PC-9 (cell line): ENCODE measurements at regions of chr15 and their contacts with region 1.

Region 1: DNA sequence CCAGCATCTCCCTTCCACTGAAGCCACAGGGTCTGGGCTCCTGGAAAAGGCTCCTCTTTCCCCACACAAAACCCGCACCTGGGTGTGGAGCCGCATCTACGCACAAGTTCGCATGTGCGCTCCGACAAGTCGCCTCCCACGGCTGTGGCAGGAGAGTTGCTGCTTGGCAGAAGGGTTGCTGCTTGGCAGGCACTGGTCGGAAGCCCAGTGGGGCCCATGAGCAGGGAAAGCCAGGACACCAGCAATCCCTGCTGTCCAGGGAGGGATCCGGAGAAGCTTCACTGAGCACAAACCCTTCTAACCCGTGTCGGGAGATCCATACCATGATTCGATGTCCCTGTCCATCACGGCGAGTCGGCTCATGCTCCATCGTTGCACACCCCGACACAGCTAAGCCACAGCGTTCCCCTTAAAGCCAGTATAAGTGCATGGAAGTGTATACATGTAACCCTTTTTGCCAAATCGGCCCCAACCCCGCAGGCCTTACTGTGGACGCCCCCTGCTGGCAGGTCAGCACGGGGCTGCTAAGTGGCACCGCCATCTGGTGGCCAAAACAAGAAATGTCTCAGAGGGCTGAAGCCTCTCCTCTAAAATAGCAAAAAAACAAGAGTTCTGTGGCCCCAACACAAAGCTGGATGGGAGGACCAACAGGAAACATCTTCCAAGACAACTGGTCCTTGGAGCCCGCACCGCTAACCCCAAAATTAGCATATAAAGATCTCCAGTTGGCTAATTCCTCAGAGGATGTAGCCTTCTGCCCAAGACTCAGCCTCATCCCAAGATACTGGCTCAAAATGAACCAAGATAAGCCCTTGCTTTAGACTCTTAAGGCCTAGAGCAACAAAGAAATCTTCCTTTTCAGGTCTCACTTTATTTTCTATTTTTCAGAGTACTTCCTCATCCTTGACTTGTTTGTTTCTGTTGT is 8.3 kb downstream of the ANKRD63 start:
- DNase-seq: peak; percentile 55 to 83
- H3K4me3 ChIP-seq: no peak overlapping the region
- H3K27ac ChIP-seq: no peak overlapping the region
- H3K4me1 ChIP-seq: no peaks in the 10 kb centered on the region
- H3K27me3 ChIP-seq: no peaks in the 10 kb centered on the region
- CTCF ChIP-seq: peak; percentile 99

Region 2: DNA sequence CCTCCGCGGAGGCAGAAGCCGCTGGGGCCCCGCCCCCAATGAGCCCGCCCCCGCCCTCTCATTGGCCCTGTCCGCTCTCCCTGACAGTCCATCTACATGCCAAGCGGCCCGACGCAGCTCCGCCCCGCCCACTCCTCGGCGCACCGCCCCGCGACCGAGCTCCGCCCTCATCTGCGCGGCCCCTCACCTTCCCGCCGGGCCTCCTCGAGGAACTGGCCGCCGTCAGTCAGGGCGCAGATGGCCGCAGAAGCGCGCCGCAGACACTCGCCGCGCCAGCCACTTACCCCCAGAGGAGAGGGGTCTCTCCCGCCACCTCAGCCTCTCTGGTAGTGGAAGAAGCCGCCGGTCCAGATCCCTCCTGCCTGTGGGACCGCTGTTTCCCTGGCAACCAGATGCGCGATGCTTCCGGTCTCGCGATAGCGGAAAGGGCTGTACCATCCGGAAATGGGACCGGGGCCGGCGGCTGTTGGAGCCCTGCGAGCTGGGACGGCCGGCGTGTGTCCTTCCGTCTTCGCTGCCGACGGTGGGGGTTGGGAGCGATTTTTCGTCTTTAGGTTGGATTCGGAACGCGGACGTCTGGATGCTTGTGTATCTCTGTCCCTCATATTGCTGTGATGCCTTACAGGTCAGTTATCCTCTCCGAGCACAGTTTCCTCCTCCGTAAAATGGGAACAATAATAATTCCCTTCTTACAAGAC is 492.0 kb before region 1 on chr15 and contains the start of gene FSIP1:
- CTCF ChIA-PET with region 1: no interaction called
- POLR2A ChIA-PET with region 1: no interaction called
- intact Hi-C with region 1: loop called (anchors 1 kb)
- DNase-seq: peak; percentile 84 to 97
- H3K4me3 ChIP-seq: peak within 1 kb of the TSS; percentile 98
- H3K27ac ChIP-seq: peak within 1 kb of the TSS; percentile 31; the same call in 1 of the 2 replicates
- H3K4me1 ChIP-seq: peaks cover 9% of the 10 kb centered on the region
- H3K27me3 ChIP-seq: no peaks in the 10 kb centered on the region
- CTCF ChIP-seq: no peak
- total RNA-seq, gene FSIP1: 0.63 and 1.2 TPM in 2 replicates

Region 3: DNA sequence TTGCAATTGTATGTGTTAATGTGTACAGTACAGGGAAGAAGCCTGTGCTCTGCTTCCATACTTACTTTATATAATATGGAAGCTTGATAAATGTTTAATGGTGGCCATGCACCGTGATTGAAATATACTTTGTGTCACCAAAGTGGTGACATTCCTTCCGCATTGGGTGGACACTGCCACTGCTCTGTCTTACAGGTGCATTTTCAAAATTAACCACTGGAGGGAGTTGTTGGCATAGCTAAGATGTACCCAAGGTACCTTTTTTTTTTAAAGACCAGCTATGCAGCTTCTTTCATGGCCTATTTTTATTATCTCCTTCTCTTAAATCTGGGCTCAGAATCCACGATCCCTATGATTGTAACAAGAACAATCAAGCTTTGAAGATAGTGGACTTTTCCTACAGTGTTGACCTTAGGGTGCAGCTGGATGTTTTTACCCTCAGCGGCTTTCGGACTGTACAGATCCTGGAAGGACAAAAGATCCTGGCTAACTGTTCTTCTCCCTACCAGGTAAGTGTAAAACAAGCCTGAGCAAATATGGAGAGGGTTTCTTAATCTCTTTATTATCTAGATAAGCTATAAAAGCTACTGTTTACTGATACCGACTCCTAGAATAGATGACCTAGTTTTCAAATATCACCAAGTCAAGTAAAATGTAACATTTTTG is 57.3 kb before region 1 on chr15:
- CTCF ChIA-PET with region 1: interaction called, 83 read pairs
- POLR2A ChIA-PET with region 1: no interaction called
- intact Hi-C with region 1: loop called (anchors 1 kb)
- DNase-seq: peak; percentile 55 to 64
- H3K4me3 ChIP-seq: no peak overlapping the region
- H3K27ac ChIP-seq: no peak overlapping the region
- H3K4me1 ChIP-seq: no peaks in the 10 kb centered on the region
- H3K27me3 ChIP-seq: no peaks in the 10 kb centered on the region
- CTCF ChIP-seq: peak; percentile 85

Region 4: DNA sequence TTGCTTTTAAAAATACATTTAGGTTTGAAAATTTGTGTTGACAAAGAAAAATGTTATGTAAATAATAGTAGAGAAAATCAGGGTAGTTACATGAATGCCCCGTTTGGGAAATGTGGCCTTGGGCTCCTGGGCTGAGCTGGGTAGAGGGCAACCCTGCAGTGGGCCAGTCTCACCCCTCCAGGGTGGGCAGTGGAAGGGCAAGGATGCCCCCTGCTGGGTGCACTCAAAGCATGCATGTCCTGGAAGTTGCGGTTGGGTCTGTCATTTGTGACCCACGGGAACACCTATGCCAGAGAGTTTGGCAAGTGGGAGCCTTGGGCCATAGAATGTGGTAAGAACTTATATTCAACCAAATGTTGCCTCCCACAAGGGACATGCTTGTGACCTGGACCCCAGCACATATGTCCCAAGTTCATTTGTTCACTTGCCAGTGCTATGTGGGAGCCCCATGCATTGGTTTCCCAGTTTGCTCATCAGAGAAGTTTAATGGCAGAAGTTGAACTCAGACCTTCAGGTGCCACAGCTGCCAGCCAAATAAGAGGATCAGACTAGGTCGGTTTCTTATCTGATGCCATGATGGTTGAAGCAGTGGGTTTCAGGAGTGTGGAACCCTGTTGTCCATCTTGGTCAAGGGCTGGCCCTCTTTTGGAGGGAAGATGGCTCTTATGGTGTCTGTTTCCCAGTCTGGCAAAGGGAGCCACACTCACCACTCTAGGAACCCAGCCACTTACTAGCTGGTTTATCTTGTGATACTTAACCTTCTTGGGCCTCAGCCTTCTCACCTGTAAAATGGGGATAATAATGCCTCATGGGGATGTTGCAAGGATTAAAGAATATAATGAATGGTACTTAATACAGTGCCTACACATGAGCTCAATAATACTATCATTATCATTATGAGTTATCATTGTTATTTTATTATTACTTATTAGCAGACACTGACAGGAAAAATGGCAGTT is 35.7 kb after region 1 on chr15:
- CTCF ChIA-PET with region 1: interaction called, 11 read pairs
- POLR2A ChIA-PET with region 1: interaction called, 5 read pairs
- intact Hi-C with region 1: loop called (anchors 1 kb)
- DNase-seq: peak in 1 of 2 experiments; percentile 55
- H3K4me3 ChIP-seq: no peak overlapping the region
- H3K27ac ChIP-seq: no peak overlapping the region
- H3K4me1 ChIP-seq: peaks cover 9% of the 10 kb centered on the region
- H3K27me3 ChIP-seq: no peaks in the 10 kb centered on the region
- CTCF ChIP-seq: peak; percentile 74

Region 5: GRCh38 chr15:40347559-40348473 is 73.2 kb after region 1 on chr15:
- CTCF ChIA-PET with region 1: no interaction called
- POLR2A ChIA-PET with region 1: no interaction called
- intact Hi-C with region 1: no loop called
- DNase-seq: peak; percentile 76 to 79
- H3K4me3 ChIP-seq: no peak overlapping the region
- H3K27ac ChIP-seq: peak overlapping the region; percentile 44
- H3K4me1 ChIP-seq: peaks cover 65% of the 10 kb centered on the region
- H3K27me3 ChIP-seq: no peaks in the 10 kb centered on the region
- CTCF ChIP-seq: no peak

Region 6: DNA sequence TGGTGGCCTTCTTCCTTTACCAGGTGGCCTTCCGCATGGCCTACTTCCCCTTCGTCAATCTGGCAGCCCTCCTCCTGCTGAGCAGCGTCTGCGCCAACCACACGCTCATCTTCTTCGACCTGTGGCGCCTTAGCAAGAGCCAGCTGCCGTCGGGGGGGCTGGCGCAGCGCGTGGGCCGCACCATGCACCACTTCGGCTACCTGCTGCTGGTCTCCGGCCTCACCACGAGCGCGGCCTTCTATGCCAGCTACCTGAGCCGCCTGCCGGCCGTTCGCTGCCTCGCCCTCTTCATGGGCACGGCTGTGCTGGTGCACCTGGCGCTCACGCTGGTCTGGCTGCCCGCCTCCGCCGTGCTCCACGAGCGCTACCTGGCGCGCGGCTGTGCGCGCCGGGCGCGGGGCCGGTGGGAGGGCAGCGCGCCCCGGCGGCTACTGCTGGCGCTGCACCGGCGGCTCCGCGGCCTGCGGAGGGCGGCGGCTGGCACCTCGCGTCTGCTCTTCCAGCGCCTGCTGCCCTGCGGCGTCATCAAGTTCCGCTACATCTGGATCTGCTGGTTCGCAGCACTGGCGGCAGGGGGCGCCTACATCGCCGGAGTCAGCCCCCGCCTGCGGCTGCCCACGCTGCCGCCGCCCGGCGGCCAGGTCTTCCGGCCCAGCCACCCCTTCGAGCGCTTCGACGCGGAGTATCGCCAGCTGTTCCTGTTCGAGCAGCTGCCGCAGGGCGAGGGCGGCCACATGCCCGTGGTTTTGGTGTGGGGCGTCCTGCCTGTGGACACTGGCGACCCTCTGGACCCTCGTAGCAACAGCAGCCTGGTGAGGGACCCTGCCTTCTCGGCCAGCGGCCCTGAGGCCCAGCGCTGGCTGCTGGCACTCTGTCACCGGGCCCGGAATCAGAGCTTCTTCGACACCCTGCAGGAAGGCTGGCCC is 93.3 kb after region 1 on chr15:
- CTCF ChIA-PET with region 1: no interaction called
- POLR2A ChIA-PET with region 1: no interaction called
- intact Hi-C with region 1: loop called (anchors 2 kb)
- DNase-seq: peak; percentile 59 to 91
- H3K4me3 ChIP-seq: no peak overlapping the region
- H3K27ac ChIP-seq: no peak overlapping the region
- H3K4me1 ChIP-seq: no peaks in the 10 kb centered on the region
- H3K27me3 ChIP-seq: no peaks in the 10 kb centered on the region
- CTCF ChIP-seq: peak; percentile 59

Region 7: DNA sequence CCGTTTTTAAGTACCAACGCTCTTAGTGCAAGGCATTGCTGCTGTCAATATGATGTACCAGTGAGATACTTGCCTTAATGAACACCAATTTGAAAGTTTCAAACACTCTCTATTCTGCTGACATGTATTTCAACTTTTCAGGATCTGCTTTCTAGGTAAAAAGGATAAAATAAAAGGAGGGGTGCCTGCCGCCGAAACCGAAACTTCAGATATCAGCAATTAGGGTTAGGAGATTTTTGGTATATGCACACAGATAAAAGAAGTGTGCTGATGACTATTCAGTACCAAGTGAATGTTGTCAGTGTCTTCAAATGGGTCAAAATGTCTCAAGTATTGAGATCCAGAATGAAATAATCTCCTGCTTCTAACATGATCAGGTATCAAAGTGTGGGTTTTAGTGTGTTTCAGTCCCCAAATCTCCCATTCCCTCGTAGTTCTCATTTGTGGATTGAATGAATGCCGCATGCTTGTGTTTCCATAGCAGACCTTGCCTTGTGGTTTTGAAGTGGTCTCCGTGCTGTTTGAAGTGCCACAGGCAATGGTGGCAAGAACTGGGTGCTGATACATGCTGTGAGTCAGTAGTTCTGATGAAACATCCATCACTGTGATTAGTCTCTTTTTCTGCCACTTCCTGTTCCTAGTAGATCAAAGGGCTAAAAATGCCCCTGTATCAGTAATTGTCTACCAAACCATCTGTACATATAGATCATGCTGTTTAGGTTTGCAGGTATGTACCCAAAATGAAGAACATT is 218.7 kb after region 1 on chr15:
- CTCF ChIA-PET with region 1: no interaction called
- POLR2A ChIA-PET with region 1: no interaction called
- intact Hi-C with region 1: no loop called
- DNase-seq: peak in 1 of 2 experiments; percentile 78
- H3K4me3 ChIP-seq: no peak overlapping the region
- H3K27ac ChIP-seq: peak overlapping the region; percentile 52
- H3K4me1 ChIP-seq: peaks cover 15% of the 10 kb centered on the region
- H3K27me3 ChIP-seq: no peaks in the 10 kb centered on the region
- CTCF ChIP-seq: no peak

Region 8: DNA sequence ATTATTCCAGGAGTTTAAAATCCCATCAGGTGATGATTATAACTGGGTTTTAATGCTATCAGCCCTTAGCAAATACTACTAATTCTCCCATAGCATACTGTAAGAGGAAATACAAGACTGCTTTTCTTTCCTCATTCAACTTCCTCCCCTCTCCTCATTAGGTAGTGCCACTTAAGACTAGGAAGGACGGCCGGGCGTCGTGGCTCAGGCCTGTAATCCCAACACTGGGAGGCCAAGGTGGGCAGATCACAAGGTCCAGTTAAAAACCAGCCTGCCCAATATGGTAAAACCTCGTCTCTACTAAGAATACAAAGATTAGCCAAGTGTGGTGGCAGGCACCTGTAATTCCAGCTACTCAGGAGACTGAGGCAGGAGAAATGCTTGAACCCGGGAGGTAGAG is 1113.0 kb after region 1 on chr15:
- CTCF ChIA-PET with region 1: interaction called, 11 read pairs
- POLR2A ChIA-PET with region 1: no interaction called
- intact Hi-C with region 1: no loop called
- DNase-seq: no peak
- H3K4me3 ChIP-seq: no peak overlapping the region
- H3K27ac ChIP-seq: no peak overlapping the region
- H3K4me1 ChIP-seq: no peaks in the 10 kb centered on the region
- H3K27me3 ChIP-seq: no peaks in the 10 kb centered on the region
- CTCF ChIP-seq: no peak